ENCODE measurements at regions of chr10 and their contacts with region 1.

Region 1: DNA sequence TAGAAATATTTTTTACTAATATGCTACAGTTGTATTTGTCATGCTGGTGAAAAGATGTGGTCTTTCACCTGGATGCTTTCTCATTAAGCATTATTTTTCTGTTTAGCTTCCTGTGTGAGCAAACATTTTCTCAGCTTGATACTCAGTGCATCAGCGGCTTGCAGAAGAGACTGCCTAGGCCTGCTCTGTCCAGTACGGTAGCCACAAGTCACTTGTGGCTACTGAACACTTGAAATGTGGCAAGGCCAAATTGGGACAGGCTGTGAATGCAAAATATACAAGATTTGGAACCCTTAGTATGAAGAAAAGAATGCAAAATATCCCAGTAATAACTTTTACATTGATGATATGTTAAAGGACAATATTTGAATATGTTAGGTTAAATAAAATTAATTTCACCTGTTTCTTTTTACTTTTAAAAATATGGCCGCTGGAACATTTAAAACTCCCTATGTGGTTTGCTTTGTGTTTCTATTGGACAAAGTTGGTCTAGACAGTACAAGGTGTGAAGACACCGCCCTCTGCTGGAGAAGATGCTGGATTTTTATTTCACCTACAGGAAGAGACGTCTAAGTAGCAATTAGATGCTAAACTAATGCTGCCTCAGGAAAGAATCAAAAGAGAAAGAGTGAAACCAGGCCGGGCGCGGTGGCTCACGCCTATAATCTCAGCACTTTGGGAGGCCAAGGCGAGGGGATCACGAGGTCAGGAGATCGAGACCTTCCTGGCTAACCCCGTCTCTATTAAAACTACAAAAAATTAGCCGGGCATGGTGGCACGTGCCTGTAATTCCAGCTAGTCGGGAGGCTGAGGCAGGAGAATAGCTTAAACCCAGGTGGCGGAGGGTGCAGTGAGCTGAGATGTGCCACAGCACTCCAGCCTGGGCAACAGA is 5.3 kb downstream of the SRGN start:
- DNase-seq: peak; percentile 58
- ATAC-seq: peak; percentile 80 to 87
- H3K4me3 ChIP-seq: peak overlapping the region; percentile 2
- H3K27ac ChIP-seq: no peak overlapping the region
- H3K4me1 ChIP-seq: peaks cover 49% of the 10 kb centered on the region
- H3K27me3 ChIP-seq: no peaks in the 10 kb centered on the region
- CTCF ChIP-seq: peak; percentile 77

Region 2: DNA sequence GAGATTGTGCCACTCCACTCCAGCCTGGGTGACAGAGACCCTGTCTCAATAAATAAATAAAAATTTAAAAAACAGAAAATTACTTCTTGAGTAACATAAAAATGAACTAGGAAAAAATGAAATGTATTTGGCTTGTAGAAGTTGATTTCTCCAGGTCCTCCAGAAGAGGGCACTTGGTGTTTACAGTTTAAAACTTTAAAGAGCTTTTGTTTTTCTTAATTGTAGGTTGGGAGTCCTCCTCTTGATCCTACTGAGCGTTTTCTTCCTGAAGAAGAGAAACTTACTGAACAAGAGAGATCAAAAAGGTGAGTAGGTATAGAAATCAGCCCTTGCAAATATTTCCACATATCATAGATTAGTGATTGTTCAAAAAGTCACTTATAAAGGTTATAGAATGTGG is 88.4 kb before region 1 on chr10:
- intact Hi-C with region 1: loop called (anchors 10 kb)
- DNase-seq: no peak
- ATAC-seq: peak in 1 of 2 donors; percentile 57
- H3K4me3 ChIP-seq: no peak overlapping the region
- H3K27ac ChIP-seq: no peak overlapping the region
- H3K4me1 ChIP-seq: no peaks in the 10 kb centered on the region
- H3K27me3 ChIP-seq: no peaks in the 10 kb centered on the region
- CTCF ChIP-seq: peak; percentile 57

Region 3: GRCh38 chr10:69303632-69304051 is 210.4 kb after region 1 on chr10:
- intact Hi-C with region 1: no loop called
- DNase-seq: no peak
- ATAC-seq: no peak
- H3K4me3 ChIP-seq: no peak overlapping the region
- H3K27ac ChIP-seq: no peak overlapping the region
- H3K4me1 ChIP-seq: no peaks in the 10 kb centered on the region
- H3K27me3 ChIP-seq: no peaks in the 10 kb centered on the region
- CTCF ChIP-seq: no peak